ENCODE measurements at regions of chr2 and their contacts with region 1.

Region 1: DNA sequence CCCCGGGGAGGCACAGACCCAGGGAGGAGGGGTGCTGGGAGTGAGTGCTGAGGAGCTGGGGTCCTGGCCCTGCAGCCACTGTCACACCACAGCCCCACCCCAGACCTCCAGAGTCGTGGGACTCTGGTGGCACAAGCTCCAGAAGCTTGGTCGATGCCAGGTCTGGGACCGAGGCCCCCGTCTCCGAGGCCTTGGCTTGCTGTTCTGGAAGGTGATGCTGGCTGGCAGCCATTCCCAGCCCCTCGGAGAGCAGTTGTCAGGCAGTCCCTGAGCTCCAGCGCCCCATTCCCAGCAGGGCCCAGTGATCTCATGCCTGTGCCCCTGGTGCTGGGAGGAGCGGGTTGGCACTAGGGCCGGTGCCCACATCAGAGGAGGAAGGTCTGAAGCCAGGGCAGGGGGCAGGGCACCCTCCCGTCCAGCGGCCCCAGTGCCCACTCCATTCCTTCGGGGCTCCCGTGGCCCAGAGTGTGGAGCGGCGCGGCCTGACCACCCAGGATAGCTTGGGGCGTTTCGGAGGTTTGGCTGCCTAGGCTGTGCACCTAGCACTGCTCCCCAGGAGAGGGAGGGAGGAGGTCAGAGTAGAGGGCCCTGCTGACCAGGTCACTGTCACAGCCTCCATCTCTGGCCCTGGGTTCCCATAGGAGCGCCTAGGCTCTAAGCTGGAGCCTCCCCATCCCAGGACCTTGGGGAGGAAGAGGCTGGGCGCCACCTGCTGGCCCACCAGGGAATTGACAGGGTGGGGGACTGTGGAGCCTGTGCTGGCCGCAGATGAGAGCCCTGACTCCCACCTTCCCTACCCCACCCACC is 16.8 kb upstream of the ALPI start:
- DNase-seq: peak in 13 of 14 experiments; percentile 15 to 61 (median 31)
- ATAC-seq: peak; percentile 44
- H3K4me3 ChIP-seq: no peak overlapping the region
- H3K4me3 Mint-ChIP-seq: no peak overlapping the region
- H3K27ac ChIP-seq: no peak overlapping the region
- H3K27ac Mint-ChIP-seq: no peak overlapping the region
- H3K4me1 ChIP-seq: peaks cover 11% of the 10 kb centered on the region
- H3K4me1 Mint-ChIP-seq: no peaks in the 10 kb centered on the region
- H3K27me3 ChIP-seq: peaks cover 0 to 2% of the 10 kb centered on the region in 2 experiments
- H3K27me3 Mint-ChIP-seq: peaks cover 3% of the 10 kb centered on the region
- CTCF ChIP-seq: peak; percentile 77

Region 2: DNA sequence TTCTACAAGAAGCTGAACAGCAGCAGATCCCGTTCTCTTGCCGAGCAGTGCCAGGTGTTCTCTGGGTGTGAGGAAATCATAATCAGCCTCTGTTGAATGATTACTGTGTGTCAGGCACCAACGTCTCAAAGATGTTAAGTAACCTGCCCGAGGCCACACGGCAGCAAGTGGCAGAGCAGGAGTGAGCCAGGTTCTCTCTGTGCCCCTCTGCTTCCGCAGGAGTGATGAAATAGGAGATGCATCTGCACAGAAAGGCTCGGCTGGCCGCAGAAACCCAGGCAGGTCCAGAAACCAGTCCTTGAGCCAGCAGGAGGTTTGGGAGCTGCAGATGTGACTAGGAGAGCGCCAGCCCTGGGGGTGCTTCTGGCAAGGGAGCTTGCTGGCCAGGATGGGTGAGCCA is 584.5 kb before region 1 on chr2:
- CTCF ChIA-PET with region 1: no interaction called
- POLR2A ChIA-PET with region 1: no interaction called
- intact Hi-C with region 1: loop called in 1 of 2 experiments (anchors 5 kb)
- DNase-seq: no peak
- ATAC-seq: no peak
- H3K4me3 ChIP-seq: no peak overlapping the region
- H3K4me3 Mint-ChIP-seq: no peak overlapping the region
- H3K27ac ChIP-seq: no peak overlapping the region
- H3K27ac Mint-ChIP-seq: no peak overlapping the region
- H3K4me1 ChIP-seq: no peaks in the 10 kb centered on the region
- H3K4me1 Mint-ChIP-seq: peaks cover 5% of the 10 kb centered on the region
- H3K27me3 ChIP-seq: no peaks in the 10 kb centered on the region
- H3K27me3 Mint-ChIP-seq: peaks cover 18% of the 10 kb centered on the region
- CTCF ChIP-seq: no peak

Region 3: GRCh38 chr2:231900972-231901371 is 538.2 kb before region 1 on chr2:
- CTCF ChIA-PET with region 1: interaction called, 7 read pairs
- POLR2A ChIA-PET with region 1: no interaction called
- intact Hi-C with region 1: loop called (anchors 1 kb)
- DNase-seq: no peak
- ATAC-seq: no peak
- H3K4me3 ChIP-seq: no peak overlapping the region
- H3K4me3 Mint-ChIP-seq: no peak overlapping the region
- H3K27ac ChIP-seq: no peak overlapping the region
- H3K27ac Mint-ChIP-seq: no peak overlapping the region
- H3K4me1 ChIP-seq: peaks cover 2% of the 10 kb centered on the region
- H3K4me1 Mint-ChIP-seq: no peaks in the 10 kb centered on the region
- H3K27me3 ChIP-seq: no peaks in the 10 kb centered on the region
- H3K27me3 Mint-ChIP-seq: peaks cover 4% of the 10 kb centered on the region
- CTCF ChIP-seq: no peak

Region 4: DNA sequence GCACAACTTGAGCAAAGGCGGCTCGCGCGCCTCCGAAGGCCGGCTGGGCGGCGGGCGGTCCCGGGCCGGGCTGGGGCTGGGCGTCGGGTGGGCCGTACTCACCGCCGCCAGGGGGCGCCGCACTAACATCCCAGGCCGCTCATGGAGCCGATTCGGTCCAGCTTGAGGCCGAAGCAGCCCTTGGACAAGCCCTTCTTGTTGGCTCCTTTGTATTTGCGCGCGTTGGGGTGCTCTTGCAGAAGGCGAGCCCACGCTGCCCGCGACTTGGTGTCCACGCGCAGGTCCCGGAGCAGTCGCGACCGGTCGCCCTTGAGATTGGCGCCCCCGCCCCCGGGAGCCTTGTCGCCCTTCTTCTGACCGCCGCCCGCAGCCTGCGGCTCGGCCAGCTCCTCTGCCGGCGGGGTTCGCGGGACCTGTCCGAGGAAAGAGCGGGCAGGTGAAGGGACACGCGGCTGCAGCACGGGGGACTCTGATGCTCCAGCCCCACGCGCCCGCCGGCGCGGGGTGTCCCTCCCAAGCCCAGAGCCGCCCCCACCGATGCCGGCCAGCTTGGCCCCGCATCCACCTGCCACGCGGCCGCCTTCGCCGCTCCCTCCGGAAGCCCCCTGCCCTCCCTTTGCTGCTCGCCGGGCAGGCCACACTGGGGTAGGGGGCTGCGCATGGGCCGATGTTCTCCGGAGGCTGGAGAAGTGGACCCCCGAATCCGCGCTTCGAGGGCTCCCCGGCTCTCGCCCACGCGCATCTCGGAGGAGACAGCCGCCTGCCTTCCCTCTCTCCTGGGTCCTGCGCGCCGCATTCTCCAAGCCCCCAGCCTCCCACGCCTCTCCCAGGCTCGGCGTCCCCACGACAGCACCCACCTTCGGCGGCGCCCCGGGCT is 513.6 kb before region 1 on chr2:
- CTCF ChIA-PET with region 1: no interaction called
- POLR2A ChIA-PET with region 1: no interaction called
- intact Hi-C with region 1: loop called (anchors 1 to 5 kb)
- DNase-seq: peak; percentile 43 to 86 (median 62)
- ATAC-seq: peak; percentile 47
- H3K4me3 ChIP-seq: peak overlapping the region; percentile 29
- H3K4me3 Mint-ChIP-seq: no peak overlapping the region
- H3K27ac ChIP-seq: no peak overlapping the region
- H3K27ac Mint-ChIP-seq: no peak overlapping the region
- H3K4me1 ChIP-seq: peaks cover 22% of the 10 kb centered on the region
- H3K4me1 Mint-ChIP-seq: peaks cover 6% of the 10 kb centered on the region
- H3K27me3 ChIP-seq: peaks cover 40 to 58% of the 10 kb centered on the region in 2 experiments
- H3K27me3 Mint-ChIP-seq: peaks cover 55% of the 10 kb centered on the region
- CTCF ChIP-seq: peak; percentile 80

Region 5: GRCh38 chr2:232053777-232054176 is 385.4 kb before region 1 on chr2:
- CTCF ChIA-PET with region 1: no interaction called
- POLR2A ChIA-PET with region 1: no interaction called
- intact Hi-C with region 1: no loop called
- DNase-seq: no peak
- ATAC-seq: no peak
- H3K4me3 ChIP-seq: no peak overlapping the region
- H3K4me3 Mint-ChIP-seq: no peak overlapping the region
- H3K27ac ChIP-seq: no peak overlapping the region
- H3K27ac Mint-ChIP-seq: no peak overlapping the region
- H3K4me1 ChIP-seq: no peaks in the 10 kb centered on the region
- H3K4me1 Mint-ChIP-seq: peaks cover 23% of the 10 kb centered on the region
- H3K27me3 ChIP-seq: no peaks in the 10 kb centered on the region
- H3K27me3 Mint-ChIP-seq: no peaks in the 10 kb centered on the region
- CTCF ChIP-seq: no peak

Region 6: DNA sequence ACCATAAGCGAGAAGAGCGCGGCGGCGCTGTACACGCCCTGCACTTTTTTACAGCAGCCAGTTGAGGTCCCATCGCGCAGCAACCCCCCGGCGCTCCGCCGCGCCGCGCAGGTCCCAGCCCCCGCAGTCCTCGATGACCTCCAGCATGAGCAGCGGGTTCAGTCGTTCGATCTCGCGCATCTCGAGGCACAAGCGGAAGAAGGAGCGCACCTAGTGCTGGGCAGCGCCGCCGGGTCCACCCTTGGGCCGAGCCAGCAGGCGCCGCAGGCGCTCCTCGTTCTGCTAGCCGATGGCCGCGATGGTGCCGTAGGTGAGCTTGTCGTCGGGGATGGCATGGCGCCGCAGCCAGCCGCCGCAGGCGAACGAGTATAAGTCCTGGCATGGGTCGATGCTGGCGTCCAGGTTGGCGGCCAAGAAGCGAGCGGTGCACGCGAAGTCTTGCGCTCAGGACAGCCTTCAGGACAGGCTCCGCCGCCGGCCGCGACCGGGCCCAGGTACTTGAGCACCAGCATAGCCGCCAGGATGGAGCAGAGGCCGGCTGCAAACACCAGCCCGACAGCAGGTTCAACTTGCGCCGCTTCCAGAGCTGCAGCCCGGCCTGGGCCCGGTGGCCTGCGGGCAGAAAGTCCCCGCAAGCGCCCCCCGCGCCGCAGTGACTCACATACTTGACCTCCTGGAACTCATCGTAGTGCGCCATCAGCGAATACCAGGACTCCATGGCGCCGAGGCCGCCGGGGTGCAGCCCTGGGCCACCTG is 52.2 kb before region 1 on chr2:
- CTCF ChIA-PET with region 1: no interaction called
- POLR2A ChIA-PET with region 1: no interaction called
- intact Hi-C with region 1: no loop called
- DNase-seq: no peak
- ATAC-seq: no peak
- H3K4me3 ChIP-seq: no peak overlapping the region
- H3K4me3 Mint-ChIP-seq: no peak overlapping the region
- H3K27ac ChIP-seq: no peak overlapping the region
- H3K27ac Mint-ChIP-seq: no peak overlapping the region
- H3K4me1 ChIP-seq: no peaks in the 10 kb centered on the region
- H3K4me1 Mint-ChIP-seq: no peaks in the 10 kb centered on the region
- H3K27me3 ChIP-seq: peaks cover 31 to 43% of the 10 kb centered on the region in 2 experiments
- H3K27me3 Mint-ChIP-seq: peaks cover 58% of the 10 kb centered on the region
- CTCF ChIP-seq: no peak

Region 7: DNA sequence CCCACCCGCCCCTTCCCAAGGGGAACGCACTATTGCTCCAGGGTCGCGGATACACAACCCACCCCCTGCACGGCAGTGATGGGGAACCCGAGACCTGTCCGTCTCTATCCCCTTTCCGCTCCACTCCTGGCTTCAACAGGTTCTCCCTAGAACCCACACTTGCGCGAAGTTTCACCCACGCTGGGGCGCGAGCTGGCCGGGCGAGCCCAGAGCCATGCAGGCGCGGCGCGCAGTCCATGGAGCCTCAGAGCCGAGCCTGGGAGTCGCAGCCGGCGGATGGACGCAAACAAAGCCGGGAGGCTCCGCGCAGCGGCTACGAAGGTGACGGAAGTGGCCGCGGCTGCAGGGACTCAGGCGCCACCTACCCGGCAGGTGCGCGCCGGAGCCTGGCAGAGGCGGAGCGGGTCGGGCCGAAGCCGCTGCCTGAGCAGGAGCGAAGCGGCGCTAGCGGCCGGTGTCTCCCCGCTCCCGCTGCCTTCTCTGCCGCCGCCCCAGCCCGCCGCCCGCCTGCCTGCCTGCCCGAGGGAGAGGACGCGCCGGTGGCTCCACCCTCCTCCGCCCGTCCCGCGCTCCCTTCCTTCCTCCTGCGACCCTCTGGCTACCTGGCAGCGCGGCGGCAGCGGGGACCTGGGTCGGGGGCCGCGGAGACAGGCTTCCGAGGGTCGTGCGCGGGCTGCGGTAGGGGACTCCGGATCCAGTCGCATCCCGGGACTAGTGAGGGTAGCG is 18.5 kb before region 1 on chr2:
- CTCF ChIA-PET with region 1: no interaction called
- POLR2A ChIA-PET with region 1: no interaction called
- intact Hi-C with region 1: no loop called
- DNase-seq: peak in 8 of 14 experiments; percentile 8 to 53 (median 25)
- ATAC-seq: peak; percentile 24
- H3K4me3 ChIP-seq: peak overlapping the region; percentile 29
- H3K4me3 Mint-ChIP-seq: no peak overlapping the region
- H3K27ac ChIP-seq: no peak overlapping the region
- H3K27ac Mint-ChIP-seq: no peak overlapping the region
- H3K4me1 ChIP-seq: peaks cover 23% of the 10 kb centered on the region
- H3K4me1 Mint-ChIP-seq: peaks cover 10% of the 10 kb centered on the region
- H3K27me3 ChIP-seq: peaks cover 47 to 51% of the 10 kb centered on the region in 2 experiments
- H3K27me3 Mint-ChIP-seq: peaks cover 55% of the 10 kb centered on the region
- CTCF ChIP-seq: no peak

Region 8: DNA sequence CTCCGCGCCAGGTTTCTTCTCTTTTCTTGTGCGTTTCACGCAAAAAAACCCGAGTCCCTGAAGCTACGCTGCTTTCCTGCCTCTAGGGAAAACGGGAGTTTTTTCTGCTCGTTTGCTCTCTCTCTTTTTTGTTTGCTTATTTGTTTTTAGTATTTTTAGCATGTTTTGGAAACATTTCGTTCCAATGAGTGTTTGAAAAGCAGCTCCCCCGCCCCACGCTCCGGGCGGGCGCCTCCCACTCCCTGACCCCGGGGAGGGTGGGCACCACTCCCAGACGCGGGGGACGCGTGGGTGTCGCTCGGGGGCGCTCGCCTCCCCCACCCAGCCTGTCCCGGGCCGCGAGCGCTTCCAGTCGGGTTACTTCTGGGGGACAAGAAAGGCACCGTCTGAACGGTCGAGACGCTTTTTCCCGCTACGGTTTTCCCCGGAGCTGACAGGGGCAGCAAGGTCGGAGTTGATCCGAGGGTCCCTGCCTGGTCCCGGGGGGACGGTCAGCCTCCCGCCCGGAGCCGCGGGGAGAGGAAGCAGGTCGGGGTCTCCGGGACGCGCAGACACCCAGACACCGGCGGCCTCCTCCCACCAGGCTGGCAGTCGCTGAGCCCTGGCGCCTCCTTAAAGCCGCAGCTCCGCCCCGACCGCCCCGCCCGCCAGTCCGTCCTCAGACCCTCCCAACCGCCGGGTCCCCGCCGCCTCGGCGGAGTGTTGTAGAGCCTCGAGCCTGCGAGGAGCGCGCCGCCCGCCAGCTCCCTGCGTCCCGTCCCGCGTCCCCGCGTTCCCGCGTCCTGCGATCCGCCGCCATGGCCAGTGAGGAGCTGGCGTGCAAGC is 194.0 kb after region 1 on chr2 and contains the start of gene EFHD1:
- CTCF ChIA-PET with region 1: no interaction called
- POLR2A ChIA-PET with region 1: no interaction called
- intact Hi-C with region 1: no loop called
- DNase-seq: peak; percentile 8 to 65 (median 38)
- ATAC-seq: peak; percentile 52
- H3K4me3 ChIP-seq: peak within 1 kb of the TSS; percentile 48
- H3K4me3 Mint-ChIP-seq: peak within 1 kb of the TSS; percentile 20
- H3K27ac ChIP-seq: no peak within 1 kb of the TSS
- H3K27ac Mint-ChIP-seq: no peak within 1 kb of the TSS
- H3K4me1 ChIP-seq: peaks cover 23% of the 10 kb centered on the region
- H3K4me1 Mint-ChIP-seq: peaks cover 4% of the 10 kb centered on the region
- H3K27me3 ChIP-seq: peaks cover 47 to 59% of the 10 kb centered on the region in 2 experiments
- H3K27me3 Mint-ChIP-seq: peaks cover 63% of the 10 kb centered on the region
- CTCF ChIP-seq: no peak
- total RNA-seq, gene EFHD1: not detected

Measured in CD4-positive, alpha-beta T cell (primary cell).